GM12878 (cell line): ENCODE measurements at regions of chr14 and their contacts with region 1.

Region 1: DNA sequence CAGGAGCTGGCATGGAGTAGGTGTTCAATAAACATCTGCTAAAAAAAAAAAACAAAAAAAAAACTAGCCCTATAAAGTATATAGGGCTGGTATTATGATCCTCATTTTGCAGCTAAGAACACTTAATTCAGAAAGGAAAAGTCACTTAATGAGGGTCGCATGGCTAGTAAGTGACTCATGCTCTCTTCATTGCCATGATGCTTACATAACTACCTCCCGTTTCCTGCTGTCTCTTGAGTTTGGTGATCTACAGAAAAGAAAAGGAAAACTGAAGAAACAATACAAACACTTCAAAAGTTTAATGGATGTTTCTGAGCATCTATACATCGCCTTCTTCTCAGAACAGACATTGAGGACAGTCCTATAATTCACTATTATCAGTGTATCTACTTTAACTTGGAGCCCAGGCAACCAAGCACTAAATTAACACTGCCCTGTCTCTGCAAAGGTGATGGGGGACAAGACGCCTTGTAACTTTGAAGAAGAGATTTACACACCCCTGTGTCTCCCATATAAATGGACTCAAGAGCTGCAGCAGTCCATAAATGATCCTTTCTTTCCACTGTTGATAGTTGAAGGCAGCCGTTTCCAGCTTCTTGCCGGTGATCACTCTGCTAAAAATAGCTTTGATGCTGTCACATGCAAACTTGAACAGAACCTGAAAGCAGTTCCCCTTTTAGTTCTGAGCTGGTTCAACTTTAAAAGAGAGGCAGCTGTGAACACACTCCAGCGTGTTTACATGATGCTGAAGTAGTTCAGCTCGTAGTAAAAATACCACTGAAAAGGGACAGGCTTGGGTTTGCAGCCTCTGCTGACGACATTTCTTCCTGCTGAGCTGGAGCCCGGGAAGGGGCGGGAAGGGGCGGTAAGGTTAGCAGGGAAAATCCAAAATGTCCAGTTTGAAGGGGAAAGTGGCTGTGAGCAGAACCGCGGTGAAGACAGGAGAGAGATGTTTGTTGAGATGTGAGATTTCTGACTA is 113.3 kb downstream of the FOXN3 start:
- DNase-seq: peak; percentile 76
- ATAC-seq: peak; percentile 82
- H3K4me3 ChIP-seq: peak overlapping the region; percentile 51
- H3K27ac ChIP-seq: peak overlapping the region; percentile 98
- H3K4me1 ChIP-seq: peaks cover 59% of the 10 kb centered on the region
- H3K27me3 ChIP-seq: no peaks in the 10 kb centered on the region
- CTCF ChIP-seq: no peak
- EP300 ChIP-seq: peak; percentile 59 to 63
- POLR2A ChIP-seq: peak; percentile 70
- RAD21 ChIP-seq: 0 out of 2 replicates have a peak, but pooled peaks have one; percentile 2

Region 2: GRCh38 chr14:89214221-89214936 is 89.4 kb before region 1 on chr14:
- CTCF ChIA-PET with region 1: no interaction called
- POLR2A ChIA-PET with region 1: no interaction called
- RAD21 ChIA-PET with region 1: no interaction called
- SMC1A ChIA-PET with region 1: no interaction called
- in situ Hi-C with region 1: no loop called
- intact Hi-C with region 1: no loop called
- DNase-seq: no peak
- ATAC-seq: no peak
- H3K4me3 ChIP-seq: no peak overlapping the region
- H3K27ac ChIP-seq: no peak overlapping the region
- H3K4me1 ChIP-seq: no peaks in the 10 kb centered on the region
- H3K27me3 ChIP-seq: no peaks in the 10 kb centered on the region
- CTCF ChIP-seq: no peak
- EP300 ChIP-seq: no peak
- POLR2A ChIP-seq: no peak
- RAD21 ChIP-seq: no peak

Region 3: GRCh38 chr14:89276424-89276975 is 27.2 kb before region 1 on chr14:
- CTCF ChIA-PET with region 1: interaction called, 3 read pairs
- POLR2A ChIA-PET with region 1: interaction called, 15 read pairs
- RAD21 ChIA-PET with region 1: interaction called, 21 read pairs
- SMC1A ChIA-PET with region 1: interaction called, 20 read pairs
- in situ Hi-C with region 1: no loop called
- intact Hi-C with region 1: no loop called
- DNase-seq: peak; percentile 94
- ATAC-seq: peak; percentile 97
- H3K4me3 ChIP-seq: no peak overlapping the region
- H3K27ac ChIP-seq: peak overlapping the region; percentile 91
- H3K4me1 ChIP-seq: peaks cover 35% of the 10 kb centered on the region
- H3K27me3 ChIP-seq: no peaks in the 10 kb centered on the region
- CTCF ChIP-seq: no peak
- EP300 ChIP-seq: 0 out of 4 replicates have a peak, but pooled peaks of 1 of the 2 experiments have one; percentile 45
- POLR2A ChIP-seq: peak; percentile 37; the same call in 1 of the 2 replicates
- RAD21 ChIP-seq: no peak

Region 4: GRCh38 chr14:89324501-89325298 is 21.0 kb after region 1 on chr14:
- CTCF ChIA-PET with region 1: interaction called, 3 read pairs
- POLR2A ChIA-PET with region 1: interaction called, 4 read pairs
- RAD21 ChIA-PET with region 1: interaction called, 7 read pairs
- SMC1A ChIA-PET with region 1: interaction called, 22 read pairs
- in situ Hi-C with region 1: no loop called
- intact Hi-C with region 1: no loop called
- DNase-seq: no peak
- ATAC-seq: peak; percentile 73
- H3K4me3 ChIP-seq: no peak overlapping the region
- H3K27ac ChIP-seq: peak overlapping the region; percentile 33
- H3K4me1 ChIP-seq: peaks cover 37% of the 10 kb centered on the region
- H3K27me3 ChIP-seq: no peaks in the 10 kb centered on the region
- CTCF ChIP-seq: no peak
- EP300 ChIP-seq: no peak
- POLR2A ChIP-seq: no peak
- RAD21 ChIP-seq: 0 out of 2 replicates have a peak, but pooled peaks have one; percentile 4

Region 5: DNA sequence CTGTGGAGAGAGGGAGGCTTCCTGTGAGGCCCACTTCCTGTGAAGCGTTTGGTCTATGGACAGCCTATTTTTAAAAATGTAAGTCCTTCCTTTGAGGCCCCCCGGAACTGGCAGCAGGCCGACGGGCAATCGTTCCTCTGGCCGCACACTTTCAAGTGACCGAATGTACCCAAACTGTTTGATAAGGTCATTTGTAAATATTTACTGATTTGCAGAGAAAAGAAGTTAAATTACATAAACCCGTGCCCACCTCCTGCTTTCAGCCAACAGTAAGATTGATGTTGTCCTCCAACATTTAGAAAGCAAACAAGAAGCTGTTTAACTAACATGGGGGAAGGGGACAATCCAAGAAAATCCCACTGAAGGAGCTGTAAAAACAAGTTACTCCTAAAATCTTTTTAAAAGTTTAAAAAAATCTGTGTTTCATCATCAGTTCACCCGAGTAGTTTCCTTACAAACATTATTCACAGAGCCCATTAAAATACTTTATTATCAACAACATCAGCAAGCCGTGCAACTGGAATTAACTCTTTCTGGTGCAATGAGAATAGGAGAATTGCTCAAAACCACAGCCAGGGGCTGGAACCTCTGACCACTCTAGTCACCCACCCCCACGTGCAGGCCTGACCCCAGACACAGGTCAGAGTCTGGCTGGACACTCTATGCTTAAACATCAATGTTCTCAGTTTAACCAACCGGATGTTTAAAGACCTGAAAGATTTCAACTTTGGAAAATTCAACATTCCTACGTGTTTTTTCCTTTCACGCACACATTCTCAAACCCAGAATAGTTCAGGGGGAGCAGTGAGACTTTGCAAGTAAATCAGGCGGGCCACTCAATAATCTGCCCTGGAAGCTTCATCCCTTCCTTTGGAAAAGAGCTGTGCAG is 48.0 kb after region 1 on chr14:
- CTCF ChIA-PET with region 1: interaction called, 3 read pairs
- POLR2A ChIA-PET with region 1: interaction called, 4 read pairs
- RAD21 ChIA-PET with region 1: interaction called, 25 read pairs
- SMC1A ChIA-PET with region 1: interaction called, 32 read pairs
- in situ Hi-C with region 1: no loop called
- intact Hi-C with region 1: no loop called
- DNase-seq: peak; percentile 54
- ATAC-seq: peak; percentile 95
- H3K4me3 ChIP-seq: peak overlapping the region; percentile 38
- H3K27ac ChIP-seq: peak overlapping the region; percentile 91
- H3K4me1 ChIP-seq: peaks cover 24% of the 10 kb centered on the region
- H3K27me3 ChIP-seq: no peaks in the 10 kb centered on the region
- CTCF ChIP-seq: no peak
- EP300 ChIP-seq: peak in 1 of 2 experiments; percentile 47; a peak in 1 of 4 replicates
- POLR2A ChIP-seq: 0 out of 2 replicates have a peak, but pooled peaks have one; percentile 46
- RAD21 ChIP-seq: no peak

Region 6: GRCh38 chr14:89384023-89384422 is 80.3 kb after region 1 on chr14:
- CTCF ChIA-PET with region 1: interaction called, 6 read pairs
- POLR2A ChIA-PET with region 1: interaction called, 3 read pairs
- RAD21 ChIA-PET with region 1: interaction called, 37 read pairs
- SMC1A ChIA-PET with region 1: interaction called, 58 read pairs
- in situ Hi-C with region 1: no loop called
- intact Hi-C with region 1: no loop called
- DNase-seq: peak; percentile 92
- ATAC-seq: peak; percentile 92
- H3K4me3 ChIP-seq: peak overlapping the region; percentile 28
- H3K27ac ChIP-seq: peak overlapping the region; percentile 77
- H3K4me1 ChIP-seq: peaks cover 49% of the 10 kb centered on the region
- H3K27me3 ChIP-seq: no peaks in the 10 kb centered on the region
- CTCF ChIP-seq: no peak
- EP300 ChIP-seq: peak; percentile 46 to 54; a peak in 2 of 4 replicates
- POLR2A ChIP-seq: no peak
- RAD21 ChIP-seq: no peak

Region 7: DNA sequence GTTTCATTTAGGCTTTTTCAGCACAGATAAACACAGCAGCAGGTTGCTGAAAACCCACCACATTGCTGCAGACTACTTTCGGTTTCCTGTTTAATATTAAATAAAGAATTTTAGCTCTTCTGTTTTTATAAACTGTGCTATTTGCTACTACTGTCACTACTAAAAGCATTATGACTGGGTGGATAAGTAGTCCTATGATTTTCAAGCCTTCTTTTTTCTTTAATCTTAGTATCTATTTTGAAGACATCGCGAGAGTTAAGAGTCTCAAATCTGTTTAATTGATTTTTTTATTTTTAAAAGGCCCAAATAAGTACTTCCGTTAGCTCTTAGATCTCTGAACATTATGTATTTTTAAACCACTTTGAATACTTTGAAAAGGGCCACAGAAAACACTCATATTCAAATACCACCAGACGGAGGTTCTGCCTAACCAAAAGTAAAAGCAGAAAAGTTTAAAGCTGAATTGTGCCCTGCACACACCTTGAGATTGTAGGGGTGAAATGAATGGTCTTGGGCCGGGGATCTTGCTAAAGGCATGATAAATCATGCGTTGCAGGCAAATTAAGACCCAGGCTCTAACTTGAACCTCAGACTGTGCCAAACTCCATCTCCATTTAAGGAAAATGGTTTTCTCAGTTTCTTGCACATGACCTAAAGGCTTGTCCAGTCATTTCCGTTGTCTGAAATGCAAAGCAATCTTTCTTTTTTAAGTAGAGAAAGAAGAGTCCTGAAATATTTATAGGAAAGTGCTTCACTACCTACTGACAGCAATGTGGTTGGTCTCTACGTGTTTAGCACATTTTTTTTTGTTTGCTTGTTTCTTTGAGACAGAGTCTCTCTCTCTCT is 126.9 kb after region 1 on chr14:
- CTCF ChIA-PET with region 1: no interaction called
- POLR2A ChIA-PET with region 1: interaction called, 3 read pairs
- RAD21 ChIA-PET with region 1: interaction called, 12 read pairs
- SMC1A ChIA-PET with region 1: interaction called, 11 read pairs
- in situ Hi-C with region 1: no loop called
- intact Hi-C with region 1: no loop called
- DNase-seq: peak; percentile 99
- ATAC-seq: peak; percentile 95
- H3K4me3 ChIP-seq: peak overlapping the region; percentile 29
- H3K27ac ChIP-seq: peak overlapping the region; percentile 97
- H3K4me1 ChIP-seq: peaks cover 49% of the 10 kb centered on the region
- H3K27me3 ChIP-seq: no peaks in the 10 kb centered on the region
- CTCF ChIP-seq: no peak
- EP300 ChIP-seq: peak; percentile 90 to 94
- POLR2A ChIP-seq: peak; percentile 37; the same call in 1 of the 2 replicates
- RAD21 ChIP-seq: peak; percentile 27; the same call in 1 of the 2 replicates